Gastrocnemius medialis (tissue), 4 donors: ENCODE measurements at regions of chr10 and their contacts with region 1.

Region 1: DNA sequence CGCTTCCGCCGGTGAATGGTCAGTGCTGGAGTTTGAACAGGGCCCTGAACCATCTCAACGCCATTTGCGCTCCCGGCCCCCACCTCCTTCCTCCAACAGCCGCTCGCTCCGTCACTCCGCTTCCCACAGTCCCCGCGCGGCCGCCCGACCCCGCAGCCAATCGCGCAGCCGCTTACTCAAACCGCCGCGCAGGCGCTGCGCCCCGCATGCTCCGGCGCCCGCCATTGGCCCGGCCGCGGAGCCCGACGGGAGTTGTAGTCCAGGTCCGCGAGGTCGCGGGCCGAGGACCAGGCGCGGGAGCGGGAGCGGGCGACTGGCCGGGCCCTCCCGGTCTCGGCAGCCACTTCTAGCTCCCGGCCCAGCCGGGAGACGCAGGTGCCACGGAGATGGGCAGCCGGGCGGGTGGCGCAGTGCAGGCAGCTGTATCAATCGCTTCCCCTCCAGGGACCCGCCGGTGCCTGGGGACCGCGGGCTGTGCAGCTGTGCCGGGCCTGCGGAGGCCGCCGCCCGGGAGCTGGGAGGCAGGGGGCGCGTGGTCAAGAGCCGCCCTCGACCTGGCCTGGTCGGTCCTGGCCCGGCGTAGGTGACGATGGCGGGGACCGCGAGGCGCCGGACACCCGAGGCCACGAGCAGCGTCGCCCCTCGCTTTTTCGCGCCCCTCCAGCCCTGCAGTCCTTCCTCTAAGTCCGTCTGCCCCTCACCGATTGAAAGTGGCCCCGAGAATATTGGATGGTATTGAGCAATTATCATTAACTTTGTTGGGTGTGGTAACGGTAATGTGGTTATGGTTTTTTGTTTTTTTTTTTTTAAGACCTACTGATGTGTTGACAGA is at the start of gene WAPL:
- DNase-seq: peak; percentile 94 to 95
- ATAC-seq: peak; percentile 90 to 92
- H3K4me3 ChIP-seq: peak within 1 kb of the TSS; percentile 78 to 96 (median 87)
- H3K27ac ChIP-seq: peak within 1 kb of the TSS; percentile 94 to 98 (median 94)
- H3K4me1 ChIP-seq: peaks cover 55 to 58% of the 10 kb centered on the region in 2 donors
- H3K27me3 ChIP-seq: no peaks in the 10 kb centered on the region
- CTCF ChIP-seq: no peak
- POLR2A ChIP-seq: peak; percentile 93 to 96
- total RNA-seq, gene WAPL: 36.9 to 43.4 (median 39.6) TPM

Region 2: GRCh38 chr10:86585037-86585725 is 63.3 kb after region 1 on chr10:
- in situ Hi-C with region 1: no loop called
- intact Hi-C with region 1: loop called (anchors 1 kb)
- DNase-seq: peak; percentile 37 to 65
- ATAC-seq: peak; percentile 87 to 95
- H3K4me3 ChIP-seq: peak overlapping the region in 1 of 4 donors; percentile 21
- H3K27ac ChIP-seq: peak overlapping the region; percentile 31 to 65 (median 51)
- H3K4me1 ChIP-seq: peaks cover 5 to 7% of the 10 kb centered on the region in 2 donors
- H3K27me3 ChIP-seq: no peaks in the 10 kb centered on the region
- CTCF ChIP-seq: peak; percentile 92 to 98 (median 96)
- POLR2A ChIP-seq: no peak

Region 3: DNA sequence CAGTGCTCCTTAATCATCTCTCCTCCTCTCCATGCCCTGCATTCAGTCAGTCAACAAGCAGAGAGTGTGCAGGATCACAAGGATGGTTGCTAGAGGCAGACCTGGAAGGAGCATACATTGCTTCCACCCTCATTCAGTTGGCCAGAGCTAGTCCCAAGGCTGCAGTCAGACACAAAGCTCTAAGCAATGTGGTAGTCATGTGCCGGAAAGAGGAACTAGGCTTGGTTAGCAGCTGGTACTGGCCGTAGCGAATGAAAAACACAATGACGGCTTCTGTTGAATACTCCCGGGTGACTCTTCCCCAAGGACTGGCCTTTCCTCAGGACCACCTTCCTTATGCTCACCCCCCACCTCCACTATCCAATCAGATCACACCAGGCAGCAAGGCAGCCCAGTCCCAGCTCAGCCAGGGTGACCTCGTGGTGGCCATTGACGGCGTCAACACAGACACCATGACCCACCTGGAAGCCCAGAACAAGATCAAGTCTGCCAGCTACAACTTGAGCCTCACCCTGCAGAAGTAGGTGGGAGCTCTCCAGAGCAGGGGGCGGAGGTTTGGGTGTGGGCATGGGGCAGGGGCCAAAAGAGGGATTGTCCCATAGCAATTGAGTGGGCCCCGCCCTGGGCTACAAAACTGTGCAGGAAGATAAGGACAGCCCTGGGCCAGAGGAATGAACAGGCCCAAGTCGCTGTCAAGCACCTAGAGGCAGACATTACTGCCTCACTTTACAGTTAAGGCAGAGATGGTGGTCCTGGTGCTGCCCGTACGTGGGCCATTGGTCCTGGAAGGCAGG is 157.3 kb after region 1 on chr10:
- in situ Hi-C with region 1: loop called in 1 of 4 experiments (anchors 10 kb)
- intact Hi-C with region 1: loop called (anchors 5 kb)
- DNase-seq: no peak
- ATAC-seq: peak; percentile 15 to 72
- H3K4me3 ChIP-seq: no peak overlapping the region
- H3K27ac ChIP-seq: peak overlapping the region; percentile 98 to 100 (median 99)
- H3K4me1 ChIP-seq: peaks cover 96 to 100% of the 10 kb centered on the region in 2 donors
- H3K27me3 ChIP-seq: no peaks in the 10 kb centered on the region
- CTCF ChIP-seq: no peak
- POLR2A ChIP-seq: no peak